ENCODE measurements at regions of chr20 and their contacts with region 1.

Region 1: GRCh38 chr20:44747166-44748004 is 1.7 kb downstream of the KCNK15 start:
- DNase-seq: peak; percentile 93
- H3K27ac ChIP-seq: peak overlapping the region; percentile 27
- CTCF ChIP-seq: peak; percentile 89

Region 2: GRCh38 chr20:44733341-44734069 is 13.9 kb before region 1 on chr20:
- CTCF ChIA-PET with region 1: interaction called, 13 read pairs
- POLR2A ChIA-PET with region 1: no interaction called
- DNase-seq: peak; percentile 90
- H3K27ac ChIP-seq: no peak overlapping the region
- CTCF ChIP-seq: peak; percentile 99

Region 3: GRCh38 chr20:44758247-44759101 is 11.1 kb after region 1 on chr20:
- CTCF ChIA-PET with region 1: interaction called, 15 read pairs
- POLR2A ChIA-PET with region 1: no interaction called
- DNase-seq: no peak
- H3K27ac ChIP-seq: no peak overlapping the region
- CTCF ChIP-seq: no peak

Region 4: DNA sequence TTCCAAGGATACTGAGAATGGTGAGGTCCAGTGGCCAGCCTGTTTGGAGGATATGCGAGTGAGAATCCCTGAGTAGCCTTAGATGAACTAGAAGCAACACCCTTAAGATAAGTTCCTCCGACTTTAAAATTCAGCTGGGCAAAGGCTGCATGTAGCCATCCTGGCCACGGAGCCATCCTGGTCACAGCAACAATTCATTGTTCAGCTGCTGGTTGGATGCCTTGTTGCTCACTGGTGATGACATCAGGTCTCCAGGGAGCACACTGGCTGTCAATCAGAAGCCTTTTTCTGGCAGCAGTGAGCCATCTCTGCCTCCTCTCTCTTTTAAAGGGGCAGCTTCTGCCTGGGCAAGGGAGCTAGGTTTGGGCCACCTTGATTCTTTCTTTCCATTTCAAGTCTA is 85.3 kb after region 1 on chr20:
- CTCF ChIA-PET with region 1: no interaction called
- POLR2A ChIA-PET with region 1: no interaction called
- DNase-seq: peak; percentile 54
- H3K27ac ChIP-seq: no peak overlapping the region
- CTCF ChIP-seq: no peak

Region 5: GRCh38 chr20:44866703-44867335 is 119.4 kb after region 1 on chr20:
- CTCF ChIA-PET with region 1: interaction called, 25 read pairs
- POLR2A ChIA-PET with region 1: no interaction called
- DNase-seq: no peak
- H3K27ac ChIP-seq: no peak overlapping the region
- CTCF ChIP-seq: no peak

Measured in RWPE1 (cell line).